ENCODE measurements at regions of chr5 and their contacts with region 1.

Region 1: DNA sequence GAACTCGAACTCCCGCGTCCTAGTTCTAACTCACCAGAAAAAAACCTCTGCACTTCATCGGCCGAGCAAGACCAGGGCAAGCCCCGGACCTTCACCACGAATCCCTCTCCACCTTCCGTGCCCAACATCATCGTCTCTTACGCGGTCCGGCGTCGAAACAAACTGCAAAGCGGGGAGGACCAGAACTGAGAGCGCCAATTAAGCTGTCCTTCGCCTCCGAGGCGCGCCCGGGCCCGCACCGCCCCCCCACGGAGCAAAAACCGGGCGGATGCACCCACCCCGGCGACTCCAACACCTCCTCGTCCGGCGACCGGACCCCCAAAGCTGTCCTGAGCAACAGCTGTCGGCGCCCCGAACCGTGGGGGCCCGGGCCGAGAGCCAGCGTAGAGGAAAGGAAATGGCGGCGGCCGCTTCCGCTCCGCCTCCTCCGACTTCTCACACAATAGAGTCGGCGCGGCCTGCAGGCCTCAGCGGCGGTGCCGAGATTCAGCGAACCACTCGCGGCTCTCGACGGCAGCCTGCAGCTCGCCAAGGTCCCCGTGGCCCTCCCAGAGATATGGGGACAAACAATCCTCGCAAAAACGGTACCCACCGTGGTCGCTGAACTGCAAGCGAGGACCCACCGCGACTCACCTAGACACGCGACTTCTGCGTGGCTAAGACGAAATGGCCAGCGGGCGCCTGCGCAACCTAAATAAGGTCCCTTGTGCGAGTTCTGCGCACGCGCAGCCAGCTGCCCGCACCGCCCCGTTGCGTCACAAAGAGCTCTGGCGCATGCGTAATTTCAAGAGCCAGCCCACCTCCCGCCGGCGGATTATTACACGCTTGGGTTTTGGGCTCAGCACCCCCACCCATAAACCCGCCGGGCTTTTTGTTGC is at the start of gene HNRNPH1:
- DNase-seq: peak; percentile 99
- ATAC-seq: peak; percentile 74
- H3K4me3 ChIP-seq: peak within 1 kb of the TSS; percentile 78 to 96 (median 93)
- H3K4me3 Mint-ChIP-seq: peak within 1 kb of the TSS; percentile 98
- H3K27ac ChIP-seq: peak within 1 kb of the TSS; percentile 98 to 99
- H3K27ac Mint-ChIP-seq: peak within 1 kb of the TSS; percentile 99
- H3K4me1 ChIP-seq: peaks cover 39 to 45% of the 10 kb centered on the region in 2 donors
- H3K4me1 Mint-ChIP-seq: peaks cover 48% of the 10 kb centered on the region
- H3K27me3 ChIP-seq: no peaks in the 10 kb centered on the region
- H3K27me3 Mint-ChIP-seq: no peaks in the 10 kb centered on the region
- CTCF ChIP-seq: no peak
- total RNA-seq, gene HNRNPH1: 1,364 and 1,412 TPM in 2 replicates

Region 2: GRCh38 chr5:179127136-179128040 is 495.9 kb before region 1 on chr5:
- CTCF ChIA-PET with region 1: no interaction called
- POLR2A ChIA-PET with region 1: no interaction called
- intact Hi-C with region 1: no loop called
- DNase-seq: no peak
- ATAC-seq: no peak
- H3K4me3 ChIP-seq: no peak overlapping the region
- H3K4me3 Mint-ChIP-seq: no peak overlapping the region
- H3K27ac ChIP-seq: no peak overlapping the region
- H3K27ac Mint-ChIP-seq: no peak overlapping the region
- H3K4me1 ChIP-seq: no peaks in the 10 kb centered on the region
- H3K4me1 Mint-ChIP-seq: no peaks in the 10 kb centered on the region
- H3K27me3 ChIP-seq: no peaks in the 10 kb centered on the region
- H3K27me3 Mint-ChIP-seq: no peaks in the 10 kb centered on the region
- CTCF ChIP-seq: no peak

Region 3: GRCh38 chr5:179530069-179530998 is 92.9 kb before region 1 on chr5:
- CTCF ChIA-PET with region 1: no interaction called
- POLR2A ChIA-PET with region 1: interaction called, 3 read pairs
- intact Hi-C with region 1: loop called (anchors 5 kb)
- DNase-seq: peak; percentile 77
- ATAC-seq: peak; percentile 86
- H3K4me3 ChIP-seq: peak overlapping the region in 4 of 5 experiments; percentile 56 to 64 (median 64)
- H3K4me3 Mint-ChIP-seq: peak overlapping the region; percentile 78
- H3K27ac ChIP-seq: peak overlapping the region in 1 of 2 donors; percentile 47
- H3K27ac Mint-ChIP-seq: peak overlapping the region; percentile 56
- H3K4me1 ChIP-seq: peaks cover 23 to 31% of the 10 kb centered on the region in 2 donors
- H3K4me1 Mint-ChIP-seq: peaks cover 38% of the 10 kb centered on the region
- H3K27me3 ChIP-seq: no peaks in the 10 kb centered on the region
- H3K27me3 Mint-ChIP-seq: no peaks in the 10 kb centered on the region
- CTCF ChIP-seq: peak; percentile 38

Region 4: GRCh38 chr5:179559284-179560252 is 63.7 kb before region 1 on chr5:
- CTCF ChIA-PET with region 1: interaction called, 3 read pairs
- POLR2A ChIA-PET with region 1: interaction called, 6 read pairs
- intact Hi-C with region 1: loop called (anchors 1 kb)
- DNase-seq: peak; percentile 89
- ATAC-seq: peak; percentile 99
- H3K4me3 ChIP-seq: peak overlapping the region; percentile 56 to 86 (median 70)
- H3K4me3 Mint-ChIP-seq: peak overlapping the region; percentile 87
- H3K27ac ChIP-seq: peak overlapping the region; percentile 67 to 85
- H3K27ac Mint-ChIP-seq: peak overlapping the region; percentile 83
- H3K4me1 ChIP-seq: peaks cover 3 to 15% of the 10 kb centered on the region in 2 donors
- H3K4me1 Mint-ChIP-seq: peaks cover 21% of the 10 kb centered on the region
- H3K27me3 ChIP-seq: no peaks in the 10 kb centered on the region
- H3K27me3 Mint-ChIP-seq: no peaks in the 10 kb centered on the region
- CTCF ChIP-seq: no peak

Region 5: DNA sequence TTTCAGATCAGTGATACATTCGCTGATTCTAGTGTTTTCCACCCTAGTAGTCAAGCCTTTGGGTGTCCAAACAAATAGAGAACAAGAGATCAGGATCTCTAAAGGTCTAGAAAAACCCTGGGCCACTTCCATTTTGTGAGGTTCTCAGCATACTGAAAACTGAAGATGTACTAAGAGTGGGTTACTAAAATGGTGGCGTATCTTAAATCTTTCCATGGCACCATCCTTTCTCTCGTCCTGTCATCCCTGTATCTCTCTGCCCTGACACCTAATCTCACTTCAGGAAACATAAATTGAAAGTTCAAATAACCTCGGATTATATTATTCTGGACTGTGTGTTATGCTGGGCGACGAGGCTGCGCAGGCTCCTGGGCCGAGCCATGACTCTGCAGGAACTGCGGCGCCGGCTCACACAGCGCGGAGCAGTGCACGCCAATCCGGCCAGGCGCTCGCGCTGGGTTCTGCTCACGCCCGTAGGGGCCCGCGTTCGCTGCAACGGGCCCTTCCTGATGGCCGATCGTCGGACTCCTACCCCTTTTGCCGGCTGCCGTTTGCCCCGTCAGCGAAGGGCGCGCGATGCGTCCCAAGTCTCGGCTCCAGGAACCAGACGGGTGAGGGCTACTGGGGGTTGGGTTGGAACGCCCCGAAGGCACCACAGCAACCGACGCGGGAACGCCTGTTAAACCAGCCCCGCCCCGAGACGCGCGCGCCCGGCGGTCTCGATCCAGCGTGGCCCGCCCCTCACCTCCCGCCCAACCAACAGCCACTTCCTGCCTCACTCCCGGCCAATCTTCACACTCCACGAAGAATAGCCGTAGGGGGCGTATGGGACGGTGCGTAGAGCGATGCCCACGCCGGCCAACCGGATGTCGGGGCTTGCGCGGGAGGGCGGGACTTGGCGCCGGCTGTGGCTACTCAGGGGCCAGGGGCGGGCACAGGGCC is 75.0 kb after region 1 on chr5:
- CTCF ChIA-PET with region 1: no interaction called
- POLR2A ChIA-PET with region 1: interaction called, 6 read pairs
- intact Hi-C with region 1: loop called (anchors 1 kb)
- DNase-seq: peak; percentile 99
- ATAC-seq: peak; percentile 90
- H3K4me3 ChIP-seq: peak overlapping the region; percentile 65 to 95 (median 90)
- H3K4me3 Mint-ChIP-seq: peak overlapping the region; percentile 99
- H3K27ac ChIP-seq: peak overlapping the region; percentile 92 to 98
- H3K27ac Mint-ChIP-seq: peak overlapping the region; percentile 99
- H3K4me1 ChIP-seq: peaks cover 16 to 27% of the 10 kb centered on the region in 2 donors
- H3K4me1 Mint-ChIP-seq: peaks cover 30% of the 10 kb centered on the region
- H3K27me3 ChIP-seq: no peaks in the 10 kb centered on the region
- H3K27me3 Mint-ChIP-seq: no peaks in the 10 kb centered on the region
- CTCF ChIP-seq: no peak

Region 6: GRCh38 chr5:179821581-179822432 is 198.6 kb after region 1 on chr5:
- CTCF ChIA-PET with region 1: no interaction called
- POLR2A ChIA-PET with region 1: interaction called, 14 read pairs
- intact Hi-C with region 1: no loop called
- DNase-seq: peak; percentile 89
- ATAC-seq: peak; percentile 48
- H3K4me3 ChIP-seq: peak overlapping the region; percentile 22 to 94 (median 81)
- H3K4me3 Mint-ChIP-seq: peak overlapping the region; percentile 98
- H3K27ac ChIP-seq: peak overlapping the region; percentile 91 to 98
- H3K27ac Mint-ChIP-seq: peak overlapping the region; percentile 98
- H3K4me1 ChIP-seq: peaks cover 36 to 47% of the 10 kb centered on the region in 2 donors
- H3K4me1 Mint-ChIP-seq: peaks cover 55% of the 10 kb centered on the region
- H3K27me3 ChIP-seq: peaks cover 0 to 4% (median 0%) of the 10 kb centered on the region in 4 experiments
- H3K27me3 Mint-ChIP-seq: no peaks in the 10 kb centered on the region
- CTCF ChIP-seq: no peak